HEK293 (cell line): ENCODE measurements at regions of chr7 and their contacts with region 1.

Region 1: DNA sequence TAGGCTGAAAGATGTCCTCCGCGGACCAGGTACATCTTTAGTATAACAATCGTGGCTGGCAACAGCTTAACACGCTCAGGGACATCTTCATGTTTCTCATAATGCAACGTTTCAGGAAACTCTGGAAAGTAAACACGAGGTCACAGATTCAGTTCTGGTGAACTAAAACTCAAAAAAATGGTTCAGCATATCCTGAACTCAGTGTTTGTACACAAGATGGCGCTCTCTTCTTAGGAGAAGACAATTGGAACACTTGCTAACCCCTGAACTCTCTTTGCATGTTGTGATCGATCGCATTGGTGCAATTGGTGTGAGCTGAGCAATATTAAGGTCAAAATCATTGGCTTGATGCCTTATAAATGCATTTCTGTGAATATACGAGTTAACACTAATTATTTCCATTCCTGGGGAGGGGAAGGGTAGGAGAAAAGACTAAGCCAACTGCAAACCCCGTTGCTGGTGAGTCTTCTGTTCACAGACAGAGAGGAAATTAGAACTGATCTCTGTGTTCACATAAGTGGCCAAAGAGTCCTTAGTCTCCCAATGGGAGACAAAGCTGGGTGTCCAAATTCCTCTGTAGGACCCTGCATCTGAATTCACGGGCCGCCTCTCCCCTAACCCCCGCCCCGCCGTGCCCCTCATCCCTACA is 52.6 kb upstream of the FAM180A start:
- H3K4me3 ChIP-seq: no peak overlapping the region
- H3K27ac ChIP-seq: no peak overlapping the region
- H3K4me1 ChIP-seq: no peaks in the 10 kb centered on the region
- CTCF ChIP-seq: peak; percentile 83

Region 2: GRCh38 chr7:133961724-133962123 is 1839.4 kb before region 1 on chr7:
- CTCF ChIA-PET with region 1: no interaction called
- POLR2A ChIA-PET with region 1: no interaction called
- H3K4me3 ChIP-seq: no peak overlapping the region
- H3K27ac ChIP-seq: no peak overlapping the region
- H3K4me1 ChIP-seq: no peaks in the 10 kb centered on the region
- CTCF ChIP-seq: no peak

Region 3: DNA sequence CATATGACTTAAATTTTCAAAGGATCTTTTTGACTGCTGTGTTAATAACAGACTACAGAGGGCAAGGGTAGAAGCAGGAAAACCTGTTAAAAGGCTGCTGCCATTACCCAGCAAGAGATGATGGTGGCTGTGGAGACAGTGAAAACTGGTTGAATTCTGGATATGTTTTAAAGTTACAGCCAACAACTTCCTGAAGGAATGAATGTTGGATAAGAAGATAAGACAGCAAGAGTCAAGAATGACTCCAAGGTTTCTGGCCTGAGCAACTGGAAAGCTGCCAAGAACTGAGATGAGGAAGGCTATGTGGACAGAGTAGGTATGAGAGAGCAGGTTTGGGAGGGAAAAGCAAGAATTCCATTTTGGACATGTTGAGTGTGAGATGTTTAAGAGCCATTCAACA is 310.4 kb before region 1 on chr7:
- CTCF ChIA-PET with region 1: no interaction called
- POLR2A ChIA-PET with region 1: no interaction called
- H3K4me3 ChIP-seq: no peak overlapping the region
- H3K27ac ChIP-seq: no peak overlapping the region
- H3K4me1 ChIP-seq: peaks cover 2% of the 10 kb centered on the region; the same call in 1 of the 2 replicates
- CTCF ChIP-seq: no peak

Region 4: GRCh38 chr7:135710417-135711138 is 90.6 kb before region 1 on chr7:
- CTCF ChIA-PET with region 1: no interaction called
- POLR2A ChIA-PET with region 1: no interaction called
- H3K4me3 ChIP-seq: no peak overlapping the region
- H3K27ac ChIP-seq: no peak overlapping the region
- H3K4me1 ChIP-seq: peaks cover under 1% of the 10 kb centered on the region; the same call in 1 of the 2 replicates
- CTCF ChIP-seq: no peak

Region 5: DNA sequence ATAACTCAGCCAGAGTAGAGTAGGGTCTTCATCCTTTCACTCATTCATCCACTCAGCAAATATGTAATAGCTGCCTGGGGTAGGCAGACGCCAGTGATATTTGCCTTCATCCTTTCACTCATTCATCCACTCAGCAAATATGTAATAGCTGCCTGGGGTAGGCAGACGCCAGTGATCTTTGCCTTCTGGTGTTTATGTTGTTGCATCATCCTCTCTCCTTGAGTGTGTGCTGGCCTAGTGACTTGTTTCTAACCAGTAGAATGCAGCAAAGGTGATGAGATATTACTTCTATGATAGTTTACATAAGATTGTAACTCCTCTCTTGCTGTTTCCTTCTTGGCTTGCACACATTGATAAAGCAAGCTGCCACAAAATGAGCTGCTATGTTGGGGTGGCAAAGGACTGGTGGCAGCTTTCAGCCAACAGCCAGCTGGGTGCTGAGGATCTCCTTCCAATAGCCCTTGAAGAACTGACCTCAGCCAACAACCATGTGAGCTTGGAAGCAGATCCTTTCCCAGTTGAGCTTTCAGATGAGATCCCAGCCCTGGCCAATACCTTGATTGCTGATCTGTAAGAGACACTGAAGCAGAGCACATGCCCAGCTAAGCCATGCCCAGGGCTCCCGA is 199.2 kb after region 1 on chr7:
- CTCF ChIA-PET with region 1: interaction called, 14 read pairs
- POLR2A ChIA-PET with region 1: no interaction called
- H3K4me3 ChIP-seq: no peak overlapping the region
- H3K27ac ChIP-seq: no peak overlapping the region
- H3K4me1 ChIP-seq: no peaks in the 10 kb centered on the region
- CTCF ChIP-seq: no peak

Region 6: GRCh38 chr7:136009488-136010079 is 208.4 kb after region 1 on chr7:
- CTCF ChIA-PET with region 1: interaction called, 24 read pairs
- POLR2A ChIA-PET with region 1: no interaction called
- H3K4me3 ChIP-seq: no peak overlapping the region
- H3K27ac ChIP-seq: no peak overlapping the region
- H3K4me1 ChIP-seq: no peaks in the 10 kb centered on the region
- CTCF ChIP-seq: 0 out of 2 replicates have a peak, but pooled peaks have one; percentile 12